PC-3 (cell line): ENCODE measurements at regions of chr7 and their contacts with region 1.

Region 1: DNA sequence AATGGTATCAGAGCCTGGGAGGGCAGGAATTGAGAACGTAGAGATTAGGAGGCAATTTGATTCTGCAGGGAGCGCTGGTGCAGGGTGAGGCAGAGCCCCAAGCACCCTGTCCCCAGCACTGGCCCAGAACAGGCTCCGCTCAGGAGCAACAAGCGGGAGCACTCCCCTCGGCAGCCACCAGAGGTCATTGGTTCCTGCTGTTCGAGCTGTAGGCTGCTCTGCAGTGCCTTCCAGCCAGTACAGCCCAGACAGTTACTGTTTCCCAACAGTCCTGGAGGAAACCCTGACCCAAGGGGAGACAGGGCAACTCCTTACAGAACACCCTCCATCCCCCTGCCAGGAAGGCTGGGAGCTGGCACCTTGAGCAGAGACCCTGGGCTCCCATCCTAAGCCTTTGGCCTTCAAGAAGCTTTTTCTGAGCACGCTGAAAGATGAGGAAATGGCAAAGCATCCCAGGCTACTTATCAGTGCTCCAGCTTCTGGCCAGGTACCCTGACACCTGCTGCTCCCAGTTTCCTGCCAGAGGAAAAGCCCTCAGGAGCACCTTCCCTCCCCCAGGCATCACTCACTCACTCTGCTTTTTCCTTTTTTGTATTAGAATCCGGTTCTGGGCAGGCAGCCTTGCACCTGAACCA is 71.2 kb upstream of the EFCAB10 start:
- DNase-seq: peak; percentile 92
- ATAC-seq: peak; percentile 53
- H3K4me3 ChIP-seq: no peak overlapping the region
- H3K27ac ChIP-seq: no peak overlapping the region
- H3K4me1 ChIP-seq: peaks cover 47% of the 10 kb centered on the region
- H3K27me3 ChIP-seq: no peaks in the 10 kb centered on the region
- CTCF ChIP-seq: peak; percentile 96

Region 2: GRCh38 chr7:105599551-105599950 is 52.9 kb before region 1 on chr7:
- CTCF ChIA-PET with region 1: interaction called, 6 read pairs
- POLR2A ChIA-PET with region 1: no interaction called
- intact Hi-C with region 1: loop called (anchors 2 kb)
- DNase-seq: no peak
- ATAC-seq: no peak
- H3K4me3 ChIP-seq: no peak overlapping the region
- H3K27ac ChIP-seq: no peak overlapping the region
- H3K4me1 ChIP-seq: peaks cover 5% of the 10 kb centered on the region; the same call in 1 of the 2 replicates
- H3K27me3 ChIP-seq: no peaks in the 10 kb centered on the region
- CTCF ChIP-seq: no peak

Region 3: DNA sequence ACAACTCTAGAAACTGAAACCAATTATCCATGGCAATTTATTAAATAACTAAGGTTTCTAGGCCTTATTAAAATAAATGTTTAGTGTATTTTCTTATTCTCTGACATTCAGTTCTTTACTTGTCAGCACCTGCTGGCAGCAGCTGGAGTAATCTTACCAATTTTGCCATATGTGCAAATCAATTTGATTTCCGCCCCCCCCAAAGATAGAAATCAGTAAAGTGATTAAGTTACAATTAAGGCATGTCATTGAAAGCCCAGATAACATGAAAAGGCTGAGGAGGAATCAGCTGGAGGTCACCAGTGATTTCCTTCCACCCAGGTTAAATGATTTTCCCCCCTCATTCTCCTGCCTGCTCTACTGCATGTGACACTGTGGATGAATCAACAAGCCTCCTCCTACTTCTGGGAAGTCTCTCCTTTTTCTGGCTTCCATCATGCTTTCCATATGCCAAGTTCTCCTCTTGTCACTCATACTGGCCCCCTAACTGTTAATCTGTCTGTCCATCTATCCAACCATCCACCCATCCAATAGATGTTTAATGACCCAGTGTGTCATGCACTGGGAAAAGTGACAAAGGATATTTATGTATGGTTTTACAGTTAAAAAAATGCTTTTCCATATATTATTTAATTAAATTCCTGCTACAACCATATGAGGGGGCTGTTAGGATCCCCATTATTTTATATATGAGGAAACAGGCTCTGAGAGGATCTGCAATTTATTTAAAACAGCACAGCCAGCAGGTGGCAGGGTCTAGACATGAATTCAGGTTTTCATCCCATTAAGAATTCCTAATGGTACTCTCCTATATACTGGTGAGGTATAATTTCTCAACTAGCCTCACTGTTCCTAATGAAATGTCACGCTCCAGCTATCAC is 107.4 kb after region 1 on chr7:
- CTCF ChIA-PET with region 1: interaction called, 6 read pairs
- POLR2A ChIA-PET with region 1: no interaction called
- intact Hi-C with region 1: loop called (anchors 1 kb)
- DNase-seq: peak; percentile 85
- ATAC-seq: peak; percentile 80
- H3K4me3 ChIP-seq: no peak overlapping the region
- H3K27ac ChIP-seq: no peak overlapping the region
- H3K4me1 ChIP-seq: no peaks in the 10 kb centered on the region; the same call in 1 of the 2 replicates
- H3K27me3 ChIP-seq: no peaks in the 10 kb centered on the region
- CTCF ChIP-seq: peak; percentile 97

Region 4: DNA sequence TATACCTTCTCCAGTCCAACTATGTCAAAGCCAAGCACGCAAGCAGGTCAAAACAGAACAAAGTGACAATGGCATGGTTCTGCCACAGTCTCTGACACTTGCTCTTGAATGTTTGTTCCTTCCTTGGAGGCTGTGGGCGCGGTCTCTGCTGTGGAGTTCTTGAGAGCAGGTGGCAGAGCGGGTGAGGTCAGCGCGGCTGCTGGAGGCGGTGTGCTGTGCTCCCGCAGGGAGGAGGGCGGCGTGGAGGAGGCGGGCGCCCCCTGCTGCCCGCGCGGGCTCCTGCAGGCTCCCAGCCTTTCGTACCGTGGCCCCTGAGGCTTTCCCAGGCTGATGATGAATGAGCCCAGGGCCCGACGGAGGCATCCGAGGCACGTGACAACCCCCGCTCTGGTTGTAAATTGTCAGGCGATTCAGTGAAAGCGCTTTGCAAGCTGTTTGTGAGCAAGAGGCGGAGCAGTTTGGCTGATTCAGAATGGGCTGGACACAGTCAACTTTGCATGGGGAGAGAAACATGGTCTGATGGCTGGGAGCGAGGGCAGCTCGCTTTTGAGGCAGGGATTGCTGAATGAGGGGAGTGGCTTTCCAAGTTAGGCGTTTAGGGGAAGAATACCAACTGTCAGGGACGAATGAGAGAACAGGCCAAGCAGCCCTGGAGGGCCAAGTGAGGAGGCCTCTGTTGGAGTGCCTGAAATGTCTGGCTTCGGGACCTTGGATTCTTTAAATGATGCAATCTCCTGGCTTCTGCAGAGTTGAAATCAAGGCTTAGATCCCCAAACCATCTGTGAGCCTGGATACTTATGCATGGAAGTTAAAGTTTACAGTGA is 357.1 kb after region 1 on chr7:
- CTCF ChIA-PET with region 1: no interaction called
- POLR2A ChIA-PET with region 1: no interaction called
- intact Hi-C with region 1: loop called (anchors 1 kb)
- DNase-seq: peak; percentile 91
- ATAC-seq: peak; percentile 99
- H3K4me3 ChIP-seq: no peak overlapping the region
- H3K27ac ChIP-seq: no peak overlapping the region
- H3K4me1 ChIP-seq: no peaks in the 10 kb centered on the region
- H3K27me3 ChIP-seq: no peaks in the 10 kb centered on the region
- CTCF ChIP-seq: peak; percentile 99

Region 5: GRCh38 chr7:106153891-106154449 is 501.5 kb after region 1 on chr7:
- CTCF ChIA-PET with region 1: no interaction called
- POLR2A ChIA-PET with region 1: no interaction called
- intact Hi-C with region 1: loop called (anchors 10 kb)
- DNase-seq: peak; percentile 93
- ATAC-seq: peak; percentile 99
- H3K4me3 ChIP-seq: peak overlapping the region; percentile 39; the same call in 1 of the 2 replicates
- H3K27ac ChIP-seq: no peak overlapping the region
- H3K4me1 ChIP-seq: peaks cover 8% of the 10 kb centered on the region
- H3K27me3 ChIP-seq: no peaks in the 10 kb centered on the region
- CTCF ChIP-seq: peak; percentile 99